PC-9 (cell line): ENCODE measurements at regions of chr1 and their contacts with region 1.

Region 1: DNA sequence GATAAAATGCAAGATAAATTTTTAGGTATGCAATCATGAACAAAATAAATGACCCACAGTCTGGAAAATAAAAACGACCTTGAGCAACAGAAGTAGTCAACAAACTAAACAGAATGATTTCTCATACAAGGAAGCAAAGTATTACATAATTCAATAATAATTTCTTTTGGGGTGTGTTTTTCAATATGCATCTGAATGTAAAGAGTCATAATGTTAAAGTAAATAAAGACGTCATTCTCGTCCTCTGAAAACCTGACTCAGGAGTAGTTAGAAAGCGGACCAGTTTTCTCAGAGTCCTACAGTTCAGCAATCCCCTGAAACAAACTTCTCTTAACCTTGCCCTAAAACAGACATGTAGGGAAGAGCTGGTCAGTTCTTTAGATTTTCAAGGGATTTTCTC is 18.6 kb downstream of the CDC42BPA start:
- DNase-seq: peak in 1 of 2 experiments; percentile 93
- H3K4me3 ChIP-seq: peak overlapping the region; percentile 34
- H3K27ac ChIP-seq: peak overlapping the region; percentile 91
- H3K4me1 ChIP-seq: peaks cover 25% of the 10 kb centered on the region
- H3K27me3 ChIP-seq: no peaks in the 10 kb centered on the region
- CTCF ChIP-seq: no peak

Region 2: DNA sequence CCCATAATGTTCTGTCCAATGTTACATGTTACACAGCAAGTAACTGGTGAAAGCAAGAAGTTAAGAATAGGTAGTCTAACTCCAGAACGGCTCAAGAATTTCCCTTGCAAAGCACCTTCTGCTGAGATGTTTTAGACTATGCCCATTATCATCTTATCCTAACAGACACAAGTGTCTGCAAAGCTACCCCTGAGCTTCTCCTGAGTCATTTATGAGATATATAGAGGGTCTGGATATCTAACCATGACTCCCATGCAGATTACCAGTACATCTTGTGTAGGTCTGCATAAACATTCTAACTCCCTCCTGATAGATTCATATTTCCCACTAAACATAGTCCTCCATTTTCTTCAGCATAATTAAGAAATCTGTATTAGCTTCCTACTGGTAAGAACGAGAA is 187.9 kb before region 1 on chr1:
- CTCF ChIA-PET with region 1: no interaction called
- POLR2A ChIA-PET with region 1: no interaction called
- intact Hi-C with region 1: no loop called
- DNase-seq: no peak
- H3K4me3 ChIP-seq: no peak overlapping the region
- H3K27ac ChIP-seq: no peak overlapping the region
- H3K4me1 ChIP-seq: no peaks in the 10 kb centered on the region
- H3K27me3 ChIP-seq: no peaks in the 10 kb centered on the region
- CTCF ChIP-seq: no peak

Region 3: GRCh38 chr1:227134686-227135314 is 164.9 kb before region 1 on chr1:
- CTCF ChIA-PET with region 1: no interaction called
- POLR2A ChIA-PET with region 1: no interaction called
- intact Hi-C with region 1: no loop called
- DNase-seq: no peak
- H3K4me3 ChIP-seq: no peak overlapping the region
- H3K27ac ChIP-seq: no peak overlapping the region
- H3K4me1 ChIP-seq: no peaks in the 10 kb centered on the region
- H3K27me3 ChIP-seq: no peaks in the 10 kb centered on the region
- CTCF ChIP-seq: no peak

Region 4: DNA sequence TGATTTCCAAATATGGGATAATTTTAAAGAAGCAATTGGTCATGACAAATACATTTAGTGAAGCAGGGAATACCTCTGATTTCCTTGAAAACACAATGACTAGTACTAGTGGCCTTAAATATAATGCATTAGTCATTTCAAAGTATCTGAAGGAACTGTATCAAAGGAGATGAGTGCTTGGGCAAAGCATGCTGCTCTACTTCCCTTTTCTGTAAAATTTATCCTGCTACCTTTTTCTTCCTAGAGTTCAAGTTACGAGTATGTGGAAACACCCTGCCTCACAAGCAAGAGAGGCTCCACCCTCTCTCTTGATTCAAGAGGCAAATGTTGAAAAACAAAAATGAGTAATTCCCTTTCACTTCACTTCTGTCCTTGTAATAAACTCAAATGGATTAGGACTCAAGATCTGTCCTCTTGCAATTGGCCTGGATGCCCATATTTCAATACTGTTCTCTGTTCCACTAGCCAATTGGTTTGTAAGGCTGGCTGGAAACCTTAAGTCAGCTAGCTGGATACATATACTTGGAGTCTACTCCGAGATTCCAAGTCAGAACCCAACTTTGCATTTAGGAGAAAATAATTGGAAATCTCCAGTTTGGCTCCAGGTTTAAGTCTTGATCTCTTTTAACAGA is 73.9 kb before region 1 on chr1:
- CTCF ChIA-PET with region 1: no interaction called
- POLR2A ChIA-PET with region 1: interaction called, 16 read pairs
- intact Hi-C with region 1: no loop called
- DNase-seq: peak; percentile 37 to 90
- H3K4me3 ChIP-seq: no peak overlapping the region
- H3K27ac ChIP-seq: peak overlapping the region; percentile 84
- H3K4me1 ChIP-seq: peaks cover 19% of the 10 kb centered on the region
- H3K27me3 ChIP-seq: no peaks in the 10 kb centered on the region
- CTCF ChIP-seq: no peak

Region 5: GRCh38 chr1:227885648-227886502 is 586.2 kb after region 1 on chr1:
- CTCF ChIA-PET with region 1: no interaction called
- POLR2A ChIA-PET with region 1: interaction called, 12 read pairs
- intact Hi-C with region 1: no loop called
- DNase-seq: peak; percentile 67 to 86
- H3K4me3 ChIP-seq: no peak overlapping the region
- H3K27ac ChIP-seq: no peak overlapping the region
- H3K4me1 ChIP-seq: 0 out of 2 replicates have a peak, but pooled peaks cover 7% of the 10 kb centered on the region
- H3K27me3 ChIP-seq: no peaks in the 10 kb centered on the region
- CTCF ChIP-seq: no peak